ENCODE measurements at regions of chr10 and their contacts with region 1.

Region 1: GRCh38 chr10:5889624-5890451 is at the starts of genes ANKRD16 and FBH1:
- DNase-seq: peak; percentile 99
- ATAC-seq: peak; percentile 84
- H3K4me3 ChIP-seq: peak within 1 kb of the TSS; percentile 51 to 88 (median 77)
- H3K4me3 Mint-ChIP-seq: peak within 1 kb of the TSS; percentile 94
- H3K27ac ChIP-seq: peak within 1 kb of the TSS; percentile 48 to 77
- H3K27ac Mint-ChIP-seq: peak within 1 kb of the TSS; percentile 88
- H3K4me1 ChIP-seq: peaks cover 28 to 33% of the 10 kb centered on the region in 2 donors
- H3K4me1 Mint-ChIP-seq: peaks cover 58% of the 10 kb centered on the region
- H3K27me3 ChIP-seq: no peaks in the 10 kb centered on the region
- H3K27me3 Mint-ChIP-seq: no peaks in the 10 kb centered on the region
- CTCF ChIP-seq: no peak
- total RNA-seq, gene ANKRD16: 12.6 and 13.1 TPM in 2 replicates
- total RNA-seq, gene FBH1: 129 and 138 TPM in 2 replicates

Region 2: GRCh38 chr10:5977471-5978229 is 87.8 kb after region 1 on chr10 and contains the start of gene IL15RA:
- CTCF ChIA-PET with region 1: interaction called, 4 read pairs
- POLR2A ChIA-PET with region 1: interaction called, 6 read pairs
- intact Hi-C with region 1: loop called (anchors 1 kb)
- DNase-seq: peak; percentile 88
- ATAC-seq: peak; percentile 77
- H3K4me3 ChIP-seq: peak within 1 kb of the TSS; percentile 74 to 96 (median 93)
- H3K4me3 Mint-ChIP-seq: peak within 1 kb of the TSS; percentile 90
- H3K27ac ChIP-seq: peak within 1 kb of the TSS; percentile 65 to 75
- H3K27ac Mint-ChIP-seq: peak within 1 kb of the TSS; percentile 95
- H3K4me1 ChIP-seq: peaks cover 8 to 27% of the 10 kb centered on the region in 2 donors
- H3K4me1 Mint-ChIP-seq: peaks cover 29% of the 10 kb centered on the region
- H3K27me3 ChIP-seq: peaks cover 0 to 3% (median 0%) of the 10 kb centered on the region in 4 experiments
- H3K27me3 Mint-ChIP-seq: no peaks in the 10 kb centered on the region
- CTCF ChIP-seq: peak; percentile 43
- total RNA-seq, gene IL15RA: 6.8 and 9.3 TPM in 2 replicates

Measured in B cell (primary cell).